ENCODE measurements at regions of chr3 and their contacts with region 1.

Region 1: DNA sequence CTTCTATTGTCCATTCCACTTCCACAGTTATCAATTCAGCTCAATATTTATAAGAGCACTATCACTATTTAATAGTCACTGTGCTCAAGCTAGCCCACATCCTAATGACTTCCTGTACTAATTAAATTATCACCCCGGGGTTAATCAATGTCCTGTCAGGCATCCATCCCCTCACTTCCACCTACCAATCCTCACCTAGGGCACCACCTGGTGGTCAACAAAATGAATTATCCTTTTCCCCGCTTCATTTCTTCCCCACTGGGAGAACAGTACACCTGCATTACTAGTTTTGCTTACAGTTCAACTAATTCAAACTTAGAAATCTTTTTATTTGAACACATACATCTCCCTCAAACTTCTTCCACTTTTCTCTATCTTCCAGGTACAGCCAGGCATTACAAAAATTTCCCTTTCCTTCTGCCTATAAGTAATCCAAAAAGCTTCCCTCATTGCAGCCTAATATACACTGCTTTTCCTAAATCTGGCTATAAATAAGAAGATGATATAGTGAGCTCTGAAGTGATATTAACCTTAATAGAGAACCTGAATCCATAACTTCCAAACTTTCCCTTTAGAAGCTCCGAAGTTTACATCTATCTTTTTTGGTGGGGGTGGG is 68.5 kb downstream of the TMCC1 start:
- DNase-seq: peak; percentile 49
- H3K4me3 Mint-ChIP-seq: no peak overlapping the region
- H3K27ac Mint-ChIP-seq: no peak overlapping the region
- H3K4me1 Mint-ChIP-seq: peaks cover 23% of the 10 kb centered on the region
- H3K27me3 Mint-ChIP-seq: no peaks in the 10 kb centered on the region

Region 2: DNA sequence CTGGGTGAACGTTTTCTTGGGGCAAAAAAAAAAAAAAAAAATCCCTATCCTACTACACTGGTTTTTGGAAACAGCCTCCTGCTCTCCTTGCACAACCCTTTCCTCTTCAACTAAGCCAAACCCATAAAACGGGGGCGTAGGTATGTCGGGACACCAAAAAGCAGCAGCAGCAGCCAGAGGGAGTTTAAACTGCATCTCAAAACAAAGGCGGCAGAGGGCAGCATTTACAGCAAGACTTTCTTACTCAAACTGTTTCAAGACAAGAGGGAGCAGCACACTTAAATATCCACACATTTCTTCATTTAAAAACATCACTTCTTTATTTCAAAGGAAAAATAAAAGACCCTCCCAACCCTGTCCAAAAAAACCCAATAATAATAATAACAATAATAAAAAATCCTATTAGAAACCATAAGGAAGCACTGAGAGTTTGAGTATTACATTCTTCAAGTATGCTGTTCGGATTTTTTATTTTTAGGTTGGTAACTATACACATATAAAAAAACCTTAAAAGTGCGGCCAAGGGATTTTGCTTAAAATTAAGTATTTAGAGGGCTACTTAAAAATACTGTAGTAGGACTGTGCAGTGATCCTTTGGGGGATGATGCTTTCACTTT is 174.7 kb before region 1 on chr3:
- CTCF ChIA-PET with region 1: interaction called, 10 read pairs
- POLR2A ChIA-PET with region 1: no interaction called
- DNase-seq: peak; percentile 68
- H3K4me3 Mint-ChIP-seq: no peak overlapping the region
- H3K27ac Mint-ChIP-seq: no peak overlapping the region
- H3K4me1 Mint-ChIP-seq: no peaks in the 10 kb centered on the region
- H3K27me3 Mint-ChIP-seq: no peaks in the 10 kb centered on the region

Measured in activated CD4-positive, alpha-beta memory T cell treated with anti-CD3 and anti-CD28 coated beads, Interleukin-2, amount 10 ng/mL, durations not matched to agents 7 days and 5 days (primary cell).